Endothelial cell of umbilical vein (primary cell): ENCODE measurements at regions of chr3 and their contacts with region 1.

Region 1: GRCh38 chr3:65785065-65785645 is 253.6 kb downstream of the MAGI1 start:
- DNase-seq: peak; percentile 73
- H3K4me3 ChIP-seq: no peak overlapping the region
- H3K27ac ChIP-seq: no peak overlapping the region
- H3K4me1 ChIP-seq: no peaks in the 10 kb centered on the region
- H3K27me3 ChIP-seq: no peaks in the 10 kb centered on the region
- CTCF ChIP-seq: peak; percentile 25 to 41
- POLR2A ChIP-seq: no peak

Region 2: GRCh38 chr3:65713016-65713415 is 72.1 kb before region 1 on chr3:
- CTCF ChIA-PET with region 1: no interaction called
- POLR2A ChIA-PET with region 1: no interaction called
- dilution Hi-C with region 1: no loop called
- intact Hi-C with region 1: no loop called
- DNase-seq: no peak
- H3K4me3 ChIP-seq: no peak overlapping the region
- H3K27ac ChIP-seq: no peak overlapping the region
- H3K4me1 ChIP-seq: no peaks in the 10 kb centered on the region
- H3K27me3 ChIP-seq: no peaks in the 10 kb centered on the region
- CTCF ChIP-seq: no peak
- POLR2A ChIP-seq: no peak

Region 3: GRCh38 chr3:65914740-65915367 is 129.7 kb after region 1 on chr3:
- CTCF ChIA-PET with region 1: interaction called, 10 read pairs
- POLR2A ChIA-PET with region 1: no interaction called
- dilution Hi-C with region 1: no loop called
- intact Hi-C with region 1: loop called (anchors 1 kb)
- DNase-seq: peak; percentile 17
- H3K4me3 ChIP-seq: no peak overlapping the region
- H3K27ac ChIP-seq: peak overlapping the region; percentile 45
- H3K4me1 ChIP-seq: peaks cover 13% of the 10 kb centered on the region
- H3K27me3 ChIP-seq: no peaks in the 10 kb centered on the region
- CTCF ChIP-seq: no peak
- POLR2A ChIP-seq: no peak

Region 4: GRCh38 chr3:66195347-66195783 is 410.2 kb after region 1 on chr3:
- CTCF ChIA-PET with region 1: interaction called, 9 read pairs
- POLR2A ChIA-PET with region 1: no interaction called
- dilution Hi-C with region 1: no loop called
- intact Hi-C with region 1: loop called (anchors 1 kb)
- DNase-seq: peak; percentile 59
- H3K4me3 ChIP-seq: peak overlapping the region in 1 of 3 experiments; percentile 9
- H3K27ac ChIP-seq: no peak overlapping the region
- H3K4me1 ChIP-seq: peaks cover 3% of the 10 kb centered on the region
- H3K27me3 ChIP-seq: peaks cover 1 to 8% of the 10 kb centered on the region in 2 experiments
- CTCF ChIP-seq: peak; percentile 10 to 20
- POLR2A ChIP-seq: no peak